ENCODE measurements at regions of chr12 and their contacts with region 1.

Region 1: GRCh38 chr12:2431810-2432209 is 363.0 kb upstream of the FKBP4 start:
- DNase-seq: peak; percentile 88
- H3K4me3 ChIP-seq: no peak overlapping the region
- H3K27ac ChIP-seq: peak overlapping the region in 3 of 4 donors; percentile 86 to 94 (median 86)
- H3K4me1 ChIP-seq: peaks cover 0 to 94% (median 85%) of the 10 kb centered on the region in 4 donors
- H3K27me3 ChIP-seq: no peaks in the 10 kb centered on the region
- CTCF ChIP-seq: no peak
- EP300 ChIP-seq: peak; percentile 87 to 98 (median 95)
- POLR2A ChIP-seq: no peak

Region 2: GRCh38 chr12:2358986-2359658 is 72.7 kb before region 1 on chr12:
- intact Hi-C with region 1: loop called (anchors 5 kb)
- DNase-seq: peak; percentile 58
- H3K4me3 ChIP-seq: no peak overlapping the region
- H3K27ac ChIP-seq: peak overlapping the region; percentile 43 to 94 (median 74)
- H3K4me1 ChIP-seq: peaks cover 0 to 57% (median 50%) of the 10 kb centered on the region in 4 donors
- H3K27me3 ChIP-seq: no peaks in the 10 kb centered on the region
- CTCF ChIP-seq: no peak
- EP300 ChIP-seq: no peak
- POLR2A ChIP-seq: no peak

Region 3: DNA sequence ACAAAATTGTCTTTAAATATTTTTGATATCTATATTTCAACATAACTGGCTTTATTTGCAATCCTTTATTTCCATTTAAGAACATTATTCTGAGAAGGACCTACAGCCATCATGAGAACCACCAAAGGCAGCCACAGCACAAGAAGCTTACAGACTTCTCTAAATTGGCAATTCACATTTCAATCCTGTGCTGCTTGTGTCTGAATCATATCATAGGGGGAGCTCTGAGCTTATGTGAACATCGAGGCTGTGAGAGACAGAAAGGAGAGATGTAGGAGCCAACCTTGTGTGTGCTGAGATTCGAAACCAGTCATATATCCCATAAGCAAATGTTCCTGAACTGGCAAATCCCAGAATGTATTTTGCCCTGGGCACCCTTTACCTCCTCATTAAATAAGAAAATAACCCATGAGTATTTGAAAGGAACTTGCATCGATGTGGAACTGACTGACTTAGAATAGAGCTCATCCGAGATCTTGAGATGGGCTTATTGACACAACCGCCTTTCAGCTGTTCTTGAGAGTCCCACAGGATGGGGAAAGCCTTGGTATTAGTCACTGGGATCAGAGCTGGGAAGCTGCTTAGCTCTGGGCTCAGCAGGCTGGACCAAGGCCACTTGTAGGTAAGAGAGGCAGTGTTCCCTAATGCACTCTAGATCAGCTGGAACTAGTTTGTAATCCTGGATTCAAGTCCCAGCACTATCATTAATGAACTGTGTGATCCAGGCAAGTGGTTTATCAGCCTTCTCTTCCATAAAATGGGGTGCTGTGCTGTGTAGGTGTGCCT is 49.2 kb before region 1 on chr12:
- intact Hi-C with region 1: loop called (anchors 5 kb)
- DNase-seq: no peak
- H3K4me3 ChIP-seq: no peak overlapping the region
- H3K27ac ChIP-seq: peak overlapping the region; percentile 72 to 90 (median 84)
- H3K4me1 ChIP-seq: peaks cover 0 to 93% (median 84%) of the 10 kb centered on the region in 4 donors
- H3K27me3 ChIP-seq: no peaks in the 10 kb centered on the region
- CTCF ChIP-seq: no peak
- EP300 ChIP-seq: no peak
- POLR2A ChIP-seq: no peak

Region 4: GRCh38 chr12:2501464-2502191 is 69.8 kb after region 1 on chr12:
- intact Hi-C with region 1: no loop called
- DNase-seq: no peak
- H3K4me3 ChIP-seq: no peak overlapping the region
- H3K27ac ChIP-seq: peak overlapping the region in 2 of 4 donors; percentile 9 to 16
- H3K4me1 ChIP-seq: no peaks in the 10 kb centered on the region
- H3K27me3 ChIP-seq: no peaks in the 10 kb centered on the region
- CTCF ChIP-seq: no peak
- EP300 ChIP-seq: no peak
- POLR2A ChIP-seq: no peak

Region 5: DNA sequence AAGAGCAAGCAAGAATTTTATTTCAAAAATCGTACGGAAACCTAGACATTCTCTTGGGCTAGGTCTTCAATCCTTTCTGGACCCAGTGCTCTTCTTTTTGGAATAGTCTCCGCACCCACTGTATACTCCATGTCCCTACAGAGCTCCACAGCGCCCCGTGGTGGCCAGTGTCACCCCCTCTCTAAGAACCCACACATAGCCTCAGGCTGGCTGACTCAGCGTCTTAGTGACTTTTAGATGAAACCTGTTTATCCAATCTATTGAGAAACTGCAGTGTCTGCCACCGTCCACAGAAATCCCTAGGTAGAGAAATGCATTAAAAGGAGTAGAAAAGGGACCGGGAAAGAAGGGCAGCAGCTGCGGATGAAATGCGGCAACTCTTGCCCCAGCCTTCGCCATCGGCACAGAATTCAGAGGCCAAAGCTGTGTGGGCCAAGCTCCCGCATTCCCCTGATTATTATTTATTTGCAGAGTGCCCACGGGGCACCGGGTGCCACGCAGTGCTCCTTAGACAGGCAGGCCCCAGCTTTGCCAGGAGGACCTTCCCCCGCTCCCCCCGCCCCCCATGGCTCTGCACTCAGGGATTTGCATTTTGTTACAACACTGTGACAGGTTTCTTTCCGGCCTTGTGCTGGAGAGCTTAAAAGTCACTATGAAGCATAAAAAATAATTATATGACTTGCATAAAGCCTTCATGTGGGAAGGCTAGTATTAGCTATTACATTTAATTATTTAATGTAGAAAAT is 192.9 kb after region 1 on chr12:
- intact Hi-C with region 1: no loop called
- DNase-seq: no peak
- H3K4me3 ChIP-seq: no peak overlapping the region
- H3K27ac ChIP-seq: peak overlapping the region in 1 of 4 donors; percentile 27
- H3K4me1 ChIP-seq: no peaks in the 10 kb centered on the region
- H3K27me3 ChIP-seq: no peaks in the 10 kb centered on the region
- CTCF ChIP-seq: peak in 1 of 4 experiments; percentile 14
- EP300 ChIP-seq: no peak
- POLR2A ChIP-seq: no peak

Region 6: GRCh38 chr12:2682296-2683251 is 250.8 kb after region 1 on chr12:
- intact Hi-C with region 1: no loop called
- DNase-seq: no peak
- H3K4me3 ChIP-seq: no peak overlapping the region
- H3K27ac ChIP-seq: peak overlapping the region in 2 of 4 donors; percentile 34 to 49
- H3K4me1 ChIP-seq: peaks cover 0 to 10% (median 3%) of the 10 kb centered on the region in 4 donors
- H3K27me3 ChIP-seq: no peaks in the 10 kb centered on the region
- CTCF ChIP-seq: peak in 2 of 4 experiments; percentile 7 to 35
- EP300 ChIP-seq: no peak
- POLR2A ChIP-seq: no peak

Measured in sigmoid colon (tissue), 7 donors.